ENCODE measurements at regions of chr11 and their contacts with region 1.

Region 1: GRCh38 chr11:74978041-74978440 is 10.7 kb upstream of the NEU3 start:
- DNase-seq: no peak
- H3K4me3 Mint-ChIP-seq: no peak overlapping the region
- H3K27ac Mint-ChIP-seq: no peak overlapping the region
- H3K4me1 Mint-ChIP-seq: peaks cover 9% of the 10 kb centered on the region
- H3K27me3 Mint-ChIP-seq: no peaks in the 10 kb centered on the region

Region 2: GRCh38 chr11:74683279-74683871 is 294.7 kb before region 1 on chr11:
- CTCF ChIA-PET with region 1: no interaction called
- POLR2A ChIA-PET with region 1: no interaction called
- DNase-seq: no peak
- H3K4me3 Mint-ChIP-seq: no peak overlapping the region
- H3K27ac Mint-ChIP-seq: no peak overlapping the region
- H3K4me1 Mint-ChIP-seq: no peaks in the 10 kb centered on the region
- H3K27me3 Mint-ChIP-seq: peaks cover 20% of the 10 kb centered on the region

Region 3: DNA sequence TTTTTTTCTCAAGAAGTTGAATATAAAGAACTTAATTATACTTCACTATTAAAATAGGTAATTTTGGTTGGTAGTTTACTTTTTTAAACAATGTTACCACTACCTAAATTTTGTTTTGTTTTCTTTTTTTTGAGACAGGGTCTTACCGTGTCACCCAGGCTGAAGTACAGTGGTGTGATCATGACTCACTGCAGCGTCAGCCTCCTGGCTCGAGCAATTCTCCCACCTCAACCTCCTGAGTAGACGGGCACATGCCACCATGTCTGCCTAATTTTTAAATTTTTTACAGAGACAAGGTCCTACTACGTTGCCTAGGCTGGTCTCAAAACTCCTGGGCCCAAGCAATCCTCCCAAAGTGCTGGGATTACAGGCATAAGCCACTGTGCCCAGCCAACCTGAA is 11.4 kb before region 1 on chr11:
- CTCF ChIA-PET with region 1: no interaction called
- POLR2A ChIA-PET with region 1: no interaction called
- DNase-seq: no peak
- H3K4me3 Mint-ChIP-seq: no peak overlapping the region
- H3K27ac Mint-ChIP-seq: no peak overlapping the region
- H3K4me1 Mint-ChIP-seq: peaks cover 13% of the 10 kb centered on the region
- H3K27me3 Mint-ChIP-seq: no peaks in the 10 kb centered on the region

Region 4: DNA sequence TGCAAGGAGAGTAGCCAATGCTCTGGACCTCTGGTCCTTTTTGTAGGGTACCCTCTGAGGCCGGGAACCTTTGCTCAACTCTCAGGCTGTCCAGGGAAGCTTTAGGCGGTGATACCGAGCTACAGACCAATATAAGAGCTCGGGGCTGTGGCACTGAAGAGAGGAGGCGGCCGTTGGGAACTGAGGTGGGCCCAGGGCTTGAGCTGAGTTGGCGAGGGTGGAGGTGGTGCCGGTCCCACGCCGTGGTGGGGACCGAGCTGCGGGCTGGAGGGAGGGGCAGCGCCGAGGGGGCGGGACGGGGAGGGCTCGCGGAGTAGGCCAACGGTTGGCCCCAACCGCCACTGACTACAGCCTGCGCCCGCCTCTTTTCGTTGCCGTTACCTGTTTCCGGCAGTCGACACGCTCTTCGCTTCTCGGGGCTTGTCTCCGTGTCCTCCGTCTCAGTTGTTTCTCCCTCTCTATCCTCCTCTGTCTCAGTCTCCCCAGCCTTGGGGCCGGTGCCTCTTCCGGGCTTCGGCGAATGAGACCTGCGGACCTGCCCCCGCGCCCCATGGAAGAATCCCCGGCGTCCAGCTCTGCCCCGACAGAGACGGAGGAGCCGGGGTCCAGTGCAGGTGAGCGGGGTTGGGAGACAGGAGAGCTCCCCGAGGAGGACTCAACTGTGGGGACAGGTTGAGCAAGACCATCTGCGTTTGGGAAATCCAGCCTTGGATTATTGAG is 10.7 kb after region 1 on chr11 and contains the start of gene NEU3:
- CTCF ChIA-PET with region 1: no interaction called
- POLR2A ChIA-PET with region 1: interaction called, 10 read pairs
- DNase-seq: peak; percentile 88
- H3K4me3 Mint-ChIP-seq: peak within 1 kb of the TSS; percentile 92
- H3K27ac Mint-ChIP-seq: peak within 1 kb of the TSS; percentile 73
- H3K4me1 Mint-ChIP-seq: peaks cover 32% of the 10 kb centered on the region
- H3K27me3 Mint-ChIP-seq: no peaks in the 10 kb centered on the region
- total RNA-seq, gene NEU3: 11.5 to 12.6 TPM

Region 5: DNA sequence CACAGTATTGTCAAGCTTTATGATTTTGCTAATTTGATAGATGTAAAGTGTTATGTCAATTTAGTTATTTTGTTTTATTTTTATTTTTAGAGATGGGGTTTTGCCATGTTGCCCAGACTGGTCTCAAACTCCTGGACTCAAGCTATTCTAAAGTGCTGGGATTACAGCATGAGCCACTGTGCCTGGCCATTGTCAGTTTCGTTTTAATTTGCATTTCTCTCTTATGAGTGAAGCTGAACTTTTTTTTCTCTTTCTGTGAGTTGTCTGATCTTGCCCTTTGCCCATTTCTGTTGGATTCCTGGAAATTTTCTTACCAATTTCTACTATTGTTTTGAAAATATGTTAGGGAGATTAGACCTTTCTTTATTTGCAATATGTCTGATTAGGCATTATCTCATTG is 26.2 kb after region 1 on chr11:
- CTCF ChIA-PET with region 1: no interaction called
- POLR2A ChIA-PET with region 1: no interaction called
- DNase-seq: no peak
- H3K4me3 Mint-ChIP-seq: no peak overlapping the region
- H3K27ac Mint-ChIP-seq: no peak overlapping the region
- H3K4me1 Mint-ChIP-seq: peaks cover 10% of the 10 kb centered on the region
- H3K27me3 Mint-ChIP-seq: no peaks in the 10 kb centered on the region